ENCODE measurements at regions of chr1 and their contacts with region 1.

Region 1: DNA sequence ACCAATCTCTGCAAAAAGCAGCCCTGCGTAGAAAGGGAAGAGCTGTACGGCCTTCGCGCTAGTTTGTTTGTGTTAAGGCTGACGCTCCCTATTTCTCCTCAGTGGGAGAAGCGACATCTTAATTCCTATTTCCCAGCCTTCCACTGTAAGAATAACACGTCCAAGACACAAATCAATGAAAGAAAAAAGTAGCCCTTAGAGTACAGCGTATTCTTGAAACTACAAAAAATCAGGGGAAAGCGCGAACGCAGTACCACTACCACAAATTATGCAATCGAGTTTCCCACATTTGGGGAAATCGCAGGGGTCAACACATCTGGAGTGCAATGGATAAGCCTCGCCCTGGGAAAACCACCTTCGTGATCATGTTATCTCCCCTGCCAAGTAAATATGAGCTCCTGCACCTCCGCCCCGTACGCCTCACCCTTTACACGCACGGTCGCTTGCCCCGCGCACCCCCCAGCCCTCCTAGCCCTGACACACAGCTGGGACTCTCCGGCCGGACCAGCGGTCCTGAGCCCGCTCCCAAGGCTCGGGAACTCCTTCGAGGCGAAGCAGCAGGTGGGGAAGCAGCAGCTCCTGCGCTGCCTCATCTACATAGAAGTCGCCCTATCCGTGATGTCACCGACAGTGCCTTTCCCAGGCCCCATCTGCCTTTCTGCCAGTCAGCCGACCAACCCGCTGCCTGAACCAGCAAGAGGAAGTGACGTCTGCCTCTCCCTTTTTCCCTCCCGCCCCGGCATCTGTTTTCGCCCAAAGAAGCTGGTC is 94.7 kb downstream of the PPIAL4G start:
- DNase-seq: peak; percentile 76 to 92 (median 85)
- ATAC-seq: peak; percentile 92 to 95 (median 94)
- H3K4me3 ChIP-seq: peak overlapping the region; percentile 39 to 58
- H3K4me3 Mint-ChIP-seq: peak overlapping the region; percentile 84 to 96 (median 91)
- H3K27ac ChIP-seq: peak overlapping the region; percentile 93
- H3K27ac Mint-ChIP-seq: peak overlapping the region; percentile 99
- H3K4me1 ChIP-seq: peaks cover 10 to 18% of the 10 kb centered on the region in 2 experiments
- H3K4me1 Mint-ChIP-seq: peaks cover 44 to 51% (median 49%) of the 10 kb centered on the region in 3 donors
- H3K27me3 ChIP-seq: no peaks in the 10 kb centered on the region
- H3K27me3 Mint-ChIP-seq: no peaks in the 10 kb centered on the region

Region 2: GRCh38 chr1:148272901-148273300 is 115.5 kb before region 1 on chr1:
- CTCF ChIA-PET with region 1: no interaction called
- POLR2A ChIA-PET with region 1: no interaction called
- DNase-seq: no peak
- ATAC-seq: no peak
- H3K4me3 ChIP-seq: no peak overlapping the region
- H3K4me3 Mint-ChIP-seq: no peak overlapping the region
- H3K27ac ChIP-seq: no peak overlapping the region
- H3K27ac Mint-ChIP-seq: no peak overlapping the region
- H3K4me1 ChIP-seq: no peaks in the 10 kb centered on the region
- H3K4me1 Mint-ChIP-seq: no peaks in the 10 kb centered on the region
- H3K27me3 ChIP-seq: peaks cover 0 to 26% of the 10 kb centered on the region in 2 experiments
- H3K27me3 Mint-ChIP-seq: peaks cover 41 to 48% of the 10 kb centered on the region in 2 donors

Region 3: GRCh38 chr1:148372731-148373130 is 15.7 kb before region 1 on chr1:
- CTCF ChIA-PET with region 1: interaction called in 1 of 2 experiments, 9 read pairs
- POLR2A ChIA-PET with region 1: interaction called, 5 to 11 read pairs
- DNase-seq: peak in 31 of 35 experiments; percentile 16 to 81 (median 48)
- ATAC-seq: peak; percentile 65 to 78 (median 71)
- H3K4me3 ChIP-seq: no peak overlapping the region
- H3K4me3 Mint-ChIP-seq: peak overlapping the region; percentile 71 to 78 (median 72)
- H3K27ac ChIP-seq: peak overlapping the region; percentile 86
- H3K27ac Mint-ChIP-seq: peak overlapping the region; percentile 95 to 98
- H3K4me1 ChIP-seq: peaks cover 38 to 46% of the 10 kb centered on the region in 2 experiments
- H3K4me1 Mint-ChIP-seq: peaks cover 49 to 54% (median 50%) of the 10 kb centered on the region in 3 donors
- H3K27me3 ChIP-seq: no peaks in the 10 kb centered on the region
- H3K27me3 Mint-ChIP-seq: no peaks in the 10 kb centered on the region

Measured in T-cell (primary cell).